GM12878 (cell line): ENCODE measurements at regions of chr22 and their contacts with region 1.

Region 1: GRCh38 chr22:31272522-31273446 is 19.5 kb downstream of the PIK3IP1 start:
- DNase-seq: no peak
- ATAC-seq: peak; percentile 88
- H3K4me3 ChIP-seq: no peak overlapping the region
- H3K27ac ChIP-seq: no peak overlapping the region
- H3K4me1 ChIP-seq: no peaks in the 10 kb centered on the region
- H3K27me3 ChIP-seq: no peaks in the 10 kb centered on the region
- CTCF ChIP-seq: peak; percentile 72 to 79 (median 74)
- EP300 ChIP-seq: no peak
- POLR2A ChIP-seq: no peak
- RAD21 ChIP-seq: peak; percentile 76

Region 2: GRCh38 chr22:31100762-31101525 is 171.8 kb before region 1 on chr22:
- CTCF ChIA-PET with region 1: interaction called, 4 read pairs
- POLR2A ChIA-PET with region 1: interaction called, 10 read pairs
- RAD21 ChIA-PET with region 1: no interaction called
- SMC1A ChIA-PET with region 1: no interaction called
- in situ Hi-C with region 1: no loop called
- intact Hi-C with region 1: loop called (anchors 5 kb)
- DNase-seq: no peak
- ATAC-seq: no peak
- H3K4me3 ChIP-seq: no peak overlapping the region
- H3K27ac ChIP-seq: no peak overlapping the region
- H3K4me1 ChIP-seq: no peaks in the 10 kb centered on the region
- H3K27me3 ChIP-seq: no peaks in the 10 kb centered on the region
- CTCF ChIP-seq: no peak
- EP300 ChIP-seq: no peak
- POLR2A ChIP-seq: no peak
- RAD21 ChIP-seq: no peak

Region 3: DNA sequence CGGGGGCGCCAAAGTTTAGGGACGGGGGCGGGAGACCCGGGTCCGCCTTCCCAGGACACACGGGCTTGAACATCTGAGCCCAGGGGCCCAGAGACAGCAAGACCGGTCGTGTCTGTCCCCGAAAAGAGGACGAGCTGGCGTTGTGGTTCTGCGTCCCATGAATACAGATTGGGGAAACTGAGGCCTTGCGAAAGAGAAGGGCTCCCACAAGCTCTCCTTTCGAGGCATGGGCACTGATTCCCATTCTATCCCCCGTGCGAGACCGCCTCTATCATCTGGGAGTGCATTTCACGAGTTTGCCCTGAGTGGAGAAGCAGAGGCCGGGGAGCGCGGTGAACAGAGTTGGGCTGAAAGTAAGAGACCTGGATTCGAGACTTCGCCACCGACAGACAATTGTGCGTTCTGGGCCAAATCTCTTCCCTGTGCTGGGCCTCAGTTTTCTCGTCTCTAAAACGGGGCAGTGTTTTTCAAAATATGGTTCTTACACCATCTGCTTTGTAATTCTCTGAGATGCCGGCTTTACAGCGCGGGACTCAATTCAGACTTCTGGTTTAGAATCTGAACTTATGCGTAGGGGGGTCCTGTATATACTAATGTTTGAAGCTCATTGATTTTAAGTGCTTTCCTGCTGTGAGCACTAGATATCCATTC is 112.3 kb before region 1 on chr22:
- CTCF ChIA-PET with region 1: interaction called, 15 read pairs
- POLR2A ChIA-PET with region 1: interaction called, 5 read pairs
- RAD21 ChIA-PET with region 1: interaction called, 4 read pairs
- SMC1A ChIA-PET with region 1: interaction called, 4 read pairs
- in situ Hi-C with region 1: no loop called
- intact Hi-C with region 1: no loop called
- DNase-seq: no peak
- ATAC-seq: peak; percentile 67
- H3K4me3 ChIP-seq: peak overlapping the region; percentile 89
- H3K27ac ChIP-seq: peak overlapping the region; percentile 13; the same call in 1 of the 2 replicates
- H3K4me1 ChIP-seq: 0 out of 2 replicates have a peak, but pooled peaks cover 3% of the 10 kb centered on the region
- H3K27me3 ChIP-seq: no peaks in the 10 kb centered on the region; a peak in 1 of 4 replicates
- CTCF ChIP-seq: no peak
- EP300 ChIP-seq: no peak
- POLR2A ChIP-seq: no peak
- RAD21 ChIP-seq: no peak

Region 4: GRCh38 chr22:31218565-31219262 is 54.1 kb before region 1 on chr22:
- CTCF ChIA-PET with region 1: interaction called, 115 read pairs
- POLR2A ChIA-PET with region 1: interaction called, 3 read pairs
- RAD21 ChIA-PET with region 1: interaction called, 40 read pairs
- SMC1A ChIA-PET with region 1: interaction called, 59 read pairs
- in situ Hi-C with region 1: no loop called
- intact Hi-C with region 1: no loop called
- DNase-seq: no peak
- ATAC-seq: peak; percentile 22; the same call in 1 of the 3 replicates
- H3K4me3 ChIP-seq: peak overlapping the region; percentile 23; the same call in 1 of the 2 replicates
- H3K27ac ChIP-seq: peak overlapping the region; percentile 75
- H3K4me1 ChIP-seq: peaks cover 44% of the 10 kb centered on the region
- H3K27me3 ChIP-seq: no peaks in the 10 kb centered on the region
- CTCF ChIP-seq: no peak
- EP300 ChIP-seq: no peak
- POLR2A ChIP-seq: no peak
- RAD21 ChIP-seq: no peak

Region 5: GRCh38 chr22:31248138-31248745 is 24.5 kb before region 1 on chr22:
- CTCF ChIA-PET with region 1: interaction called, 13 read pairs
- POLR2A ChIA-PET with region 1: interaction called, 3 read pairs
- RAD21 ChIA-PET with region 1: no interaction called
- SMC1A ChIA-PET with region 1: interaction called, 7 read pairs
- in situ Hi-C with region 1: no loop called
- intact Hi-C with region 1: no loop called
- DNase-seq: no peak
- ATAC-seq: no peak; the same call in 2 of the 3 replicates
- H3K4me3 ChIP-seq: no peak overlapping the region
- H3K27ac ChIP-seq: no peak overlapping the region
- H3K4me1 ChIP-seq: no peaks in the 10 kb centered on the region
- H3K27me3 ChIP-seq: no peaks in the 10 kb centered on the region
- CTCF ChIP-seq: no peak
- EP300 ChIP-seq: no peak
- POLR2A ChIP-seq: peak; percentile 46; the same call in 1 of the 2 replicates
- RAD21 ChIP-seq: no peak

Region 6: DNA sequence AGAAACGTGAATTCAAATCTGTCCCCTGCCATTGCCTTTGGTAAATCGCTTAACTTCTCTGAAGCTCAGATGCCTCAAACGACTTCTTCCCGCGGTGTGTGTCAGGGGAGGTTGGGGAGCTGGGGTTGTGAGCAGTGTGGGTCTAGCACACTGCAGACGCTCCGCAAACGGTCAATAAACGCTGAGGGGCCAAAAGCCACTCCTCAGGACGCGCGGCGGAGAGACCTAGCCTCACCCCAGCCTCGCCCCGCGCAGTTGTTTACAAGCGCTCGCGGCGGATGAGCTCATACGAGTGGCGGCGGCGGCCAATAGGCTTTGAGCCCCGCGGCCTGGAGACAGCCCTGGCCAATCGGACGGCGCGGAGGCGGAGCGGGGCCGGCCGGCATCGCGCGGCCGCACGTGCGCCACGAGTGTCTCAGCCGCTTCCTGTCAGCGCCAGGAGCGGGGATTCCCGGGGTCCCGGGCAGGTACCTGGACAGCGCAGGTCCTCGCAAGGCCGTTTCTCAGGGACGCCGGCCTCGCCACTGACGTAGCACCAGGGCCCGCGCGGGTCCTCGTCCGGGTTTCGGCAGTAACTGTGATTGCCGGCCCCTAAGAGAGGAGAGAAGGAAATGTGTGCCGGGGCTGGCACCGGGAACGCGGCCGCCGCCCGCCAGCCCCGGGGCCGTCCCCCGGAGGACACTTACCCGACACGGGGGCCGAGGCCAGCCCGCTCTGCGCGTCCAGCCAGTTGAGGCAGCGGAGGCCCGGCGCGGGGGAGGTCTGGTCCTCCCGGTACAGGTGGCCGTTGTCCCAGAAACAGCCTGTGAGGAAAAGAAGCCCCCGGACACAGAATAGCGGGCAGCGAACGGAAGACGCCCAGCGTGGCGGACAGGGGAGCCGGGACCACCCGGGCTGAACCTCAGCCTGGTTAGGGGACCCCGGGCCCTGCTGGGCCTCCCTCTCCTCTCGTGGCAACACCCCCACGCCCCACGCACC is 18.0 kb after region 1 on chr22:
- CTCF ChIA-PET with region 1: interaction called, 24 read pairs
- POLR2A ChIA-PET with region 1: no interaction called
- RAD21 ChIA-PET with region 1: interaction called, 8 read pairs
- SMC1A ChIA-PET with region 1: interaction called, 16 read pairs
- in situ Hi-C with region 1: no loop called
- intact Hi-C with region 1: no loop called
- DNase-seq: peak; percentile 48
- ATAC-seq: peak; percentile 96
- H3K4me3 ChIP-seq: peak overlapping the region; percentile 82
- H3K27ac ChIP-seq: peak overlapping the region; percentile 72
- H3K4me1 ChIP-seq: peaks cover 32% of the 10 kb centered on the region
- H3K27me3 ChIP-seq: no peaks in the 10 kb centered on the region
- CTCF ChIP-seq: no peak
- EP300 ChIP-seq: peak in 1 of 2 experiments; percentile 45; a peak in 1 of 4 replicates
- POLR2A ChIP-seq: peak; percentile 87
- RAD21 ChIP-seq: no peak